ENCODE measurements at regions of chr6 and their contacts with region 1.

Region 1: DNA sequence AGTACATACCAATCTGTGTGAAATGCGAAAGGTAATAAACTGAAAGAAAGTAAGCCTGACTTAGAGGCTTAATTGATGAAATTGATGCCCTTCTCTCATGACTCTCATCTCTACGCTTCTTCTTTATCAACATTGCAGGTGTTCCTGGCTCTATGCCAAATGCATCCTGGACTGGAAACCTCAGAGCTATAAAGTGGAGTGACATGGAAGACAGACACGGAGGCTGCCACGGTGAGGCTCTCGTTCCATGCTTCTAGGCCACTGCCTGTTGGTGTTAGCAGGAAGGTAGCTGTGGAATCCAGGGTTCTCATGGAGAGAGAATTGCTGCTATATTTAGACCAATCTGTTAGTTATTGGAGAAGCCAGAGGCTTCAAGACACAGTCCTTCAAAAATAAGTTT is 73.2 kb downstream of the C6orf52 start:
- DNase-seq: no peak
- H3K4me3 ChIP-seq: no peak overlapping the region
- H3K27ac ChIP-seq: no peak overlapping the region
- H3K4me1 ChIP-seq: no peaks in the 10 kb centered on the region
- H3K27me3 ChIP-seq: no peaks in the 10 kb centered on the region
- CTCF ChIP-seq: no peak

Region 2: DNA sequence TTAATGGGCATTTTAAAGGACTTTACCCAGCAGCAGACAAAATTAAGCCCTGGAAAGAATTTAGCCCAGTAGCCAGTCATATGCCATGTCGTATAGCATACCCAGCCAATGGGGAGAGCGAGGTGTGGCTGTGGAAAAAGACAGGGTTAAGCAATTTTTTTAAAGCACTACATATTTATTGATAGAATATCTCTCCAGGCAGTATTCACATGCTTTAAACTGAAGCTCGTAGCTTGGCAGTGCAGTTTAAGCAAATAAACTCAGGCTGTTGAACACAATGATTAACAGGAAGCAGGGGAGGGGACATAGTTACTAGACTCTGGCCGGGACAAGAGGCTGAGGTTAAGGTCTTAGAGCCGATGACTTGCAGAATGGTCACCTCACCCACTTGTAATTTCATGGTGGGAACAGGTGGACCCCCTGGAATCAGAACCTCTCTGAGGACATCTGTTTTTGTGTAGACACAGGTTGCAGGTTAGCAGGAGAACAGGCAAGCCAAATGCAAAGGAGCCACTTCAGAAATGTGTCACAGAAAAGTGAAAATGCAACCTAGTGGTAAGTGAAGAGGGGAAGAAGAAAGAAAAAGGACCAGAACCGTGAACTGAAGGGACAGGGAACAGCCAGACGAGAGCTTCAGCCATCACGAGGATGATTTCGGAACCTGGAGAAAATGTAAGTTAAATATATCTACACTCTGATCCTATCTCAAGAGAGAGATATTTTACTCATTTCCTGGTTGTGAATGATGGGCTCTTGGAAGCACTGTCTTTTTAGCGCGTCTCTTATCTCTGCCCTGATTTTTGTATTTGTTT is 92.8 kb before region 1 on chr6:
- CTCF ChIA-PET with region 1: no interaction called
- dilution Hi-C with region 1: loop called (anchors 5 kb)
- in situ Hi-C with region 1: no loop called
- intact Hi-C with region 1: no loop called
- DNase-seq: no peak
- H3K4me3 ChIP-seq: no peak overlapping the region
- H3K27ac ChIP-seq: no peak overlapping the region
- H3K4me1 ChIP-seq: no peaks in the 10 kb centered on the region
- H3K27me3 ChIP-seq: no peaks in the 10 kb centered on the region
- CTCF ChIP-seq: no peak

Measured in mammary epithelial cell (primary cell).